ENCODE measurements at regions of chr10 and their contacts with region 1.

Region 1: DNA sequence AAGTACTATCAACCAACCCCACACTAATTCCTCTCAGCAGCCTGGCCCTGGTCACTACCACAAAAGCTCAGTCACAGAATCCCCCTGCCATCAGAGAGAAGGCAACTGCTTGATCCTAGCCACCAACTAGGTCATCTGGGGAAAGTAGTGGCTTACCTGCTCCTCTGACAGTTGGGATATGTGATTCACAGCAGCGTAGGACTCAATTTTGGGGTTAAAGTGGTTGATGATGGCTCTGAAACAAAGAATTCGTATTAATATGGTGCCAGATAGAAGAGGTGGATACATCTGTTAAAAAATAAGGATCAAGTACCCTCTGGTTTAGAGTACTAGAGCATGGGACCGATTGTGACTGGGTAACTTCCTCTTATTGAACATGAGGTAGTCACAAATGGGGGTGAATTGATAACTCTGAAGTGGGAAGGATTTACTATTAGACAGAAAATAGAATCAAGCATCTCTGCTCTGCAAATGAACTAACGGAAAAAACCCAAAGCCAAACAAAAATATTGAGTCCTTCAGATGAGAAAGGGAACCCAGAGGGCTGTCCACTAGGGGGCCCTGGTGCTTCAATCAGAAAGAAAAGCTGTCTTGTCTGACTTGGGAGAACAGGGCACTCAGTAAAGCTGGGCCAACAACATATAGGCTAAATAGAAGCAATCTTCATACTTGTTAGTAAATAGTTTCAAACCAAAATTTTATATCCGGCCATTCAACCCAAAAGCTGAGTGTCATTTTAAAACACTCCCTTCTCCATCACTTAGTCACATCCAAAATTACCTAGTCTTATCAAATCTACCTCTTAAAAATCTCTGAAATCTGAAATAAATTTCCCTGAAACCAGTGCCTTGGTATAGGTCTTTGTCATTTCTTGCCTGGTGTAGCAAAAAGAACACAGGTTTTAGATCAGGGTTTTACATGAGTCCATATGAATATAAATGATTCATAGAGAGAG is 45.9 kb upstream of the KCNIP2 start:
- DNase-seq: peak; percentile 66
- H3K4me3 ChIP-seq: no peak overlapping the region; a peak in 1 of 4 replicates
- H3K27ac ChIP-seq: no peak overlapping the region
- H3K4me1 ChIP-seq: peaks cover 0 to 2% of the 10 kb centered on the region in 2 experiments; a peak in 1 of 4 replicates
- H3K27me3 ChIP-seq: no peaks in the 10 kb centered on the region
- CTCF ChIP-seq: peak; percentile 97
- EP300 ChIP-seq: no peak
- RAD21 ChIP-seq: peak; percentile 86

Region 2: GRCh38 chr10:101319241-101319915 is 570.2 kb before region 1 on chr10:
- CTCF ChIA-PET with region 1: no interaction called
- POLR2A ChIA-PET with region 1: no interaction called
- DNase-seq: no peak
- H3K4me3 ChIP-seq: no peak overlapping the region
- H3K27ac ChIP-seq: no peak overlapping the region
- H3K4me1 ChIP-seq: peaks cover 0 to 14% of the 10 kb centered on the region in 2 experiments; a peak in 1 of 4 replicates
- H3K27me3 ChIP-seq: no peaks in the 10 kb centered on the region; the same call in 1 of the 2 replicates
- CTCF ChIP-seq: no peak
- EP300 ChIP-seq: no peak
- RAD21 ChIP-seq: no peak

Region 3: GRCh38 chr10:101830322-101831168 is 59.0 kb before region 1 on chr10:
- CTCF ChIA-PET with region 1: interaction called, 19 read pairs
- POLR2A ChIA-PET with region 1: no interaction called
- DNase-seq: peak; percentile 96
- H3K4me3 ChIP-seq: peak overlapping the region; percentile 45 to 49
- H3K27ac ChIP-seq: peak overlapping the region; percentile 41 to 87; a peak in 3 of 4 replicates
- H3K4me1 ChIP-seq: peaks cover 14 to 35% of the 10 kb centered on the region in 2 experiments; a peak in 3 of 4 replicates
- H3K27me3 ChIP-seq: no peaks in the 10 kb centered on the region
- CTCF ChIP-seq: no peak
- EP300 ChIP-seq: no peak
- RAD21 ChIP-seq: no peak

Region 4: GRCh38 chr10:101903827-101904550 is 14.5 kb after region 1 on chr10:
- CTCF ChIA-PET with region 1: interaction called, 52 read pairs
- POLR2A ChIA-PET with region 1: no interaction called
- DNase-seq: no peak
- H3K4me3 ChIP-seq: no peak overlapping the region
- H3K27ac ChIP-seq: no peak overlapping the region
- H3K4me1 ChIP-seq: no peaks in the 10 kb centered on the region
- H3K27me3 ChIP-seq: no peaks in the 10 kb centered on the region
- CTCF ChIP-seq: no peak
- EP300 ChIP-seq: no peak
- RAD21 ChIP-seq: no peak

Region 5: DNA sequence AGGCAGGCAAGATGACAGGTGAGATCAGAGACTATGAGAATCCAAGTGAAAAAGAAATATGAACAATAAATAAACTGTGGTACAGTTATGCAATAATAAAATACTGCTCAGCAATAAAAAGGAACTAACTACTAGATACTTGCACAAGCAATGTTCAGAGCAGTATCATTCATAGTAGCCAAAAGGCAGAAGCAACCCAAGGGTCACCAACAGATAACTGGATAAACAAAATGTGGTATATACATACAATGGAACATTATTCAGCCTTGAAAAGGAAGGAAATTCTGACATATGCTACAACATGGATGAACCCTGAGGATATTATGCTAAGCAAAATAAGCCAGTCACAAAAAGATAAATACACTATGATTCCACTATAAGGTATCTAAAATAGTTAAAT is 31.0 kb after region 1 on chr10:
- CTCF ChIA-PET with region 1: interaction called, 17 read pairs
- POLR2A ChIA-PET with region 1: no interaction called
- DNase-seq: no peak
- H3K4me3 ChIP-seq: no peak overlapping the region
- H3K27ac ChIP-seq: no peak overlapping the region
- H3K4me1 ChIP-seq: no peaks in the 10 kb centered on the region
- H3K27me3 ChIP-seq: no peaks in the 10 kb centered on the region
- CTCF ChIP-seq: no peak
- EP300 ChIP-seq: no peak
- RAD21 ChIP-seq: no peak

Region 6: DNA sequence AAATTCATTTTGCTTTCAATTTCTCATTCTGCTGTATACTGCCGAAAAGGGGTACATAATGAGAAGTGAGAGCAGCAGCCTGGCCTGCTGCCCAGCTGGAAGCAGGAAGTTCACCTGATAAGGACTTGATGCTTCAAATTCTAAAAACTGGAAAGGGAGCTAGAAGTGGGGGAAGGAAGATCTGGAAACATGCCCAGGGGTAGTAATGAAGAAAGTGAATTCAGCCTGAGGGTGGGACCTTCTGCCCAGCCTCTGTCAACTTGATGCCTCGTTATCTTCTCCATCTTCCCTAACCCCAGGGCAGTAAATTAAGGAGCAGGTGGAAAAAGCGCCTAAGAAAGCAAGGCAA is 97.1 kb after region 1 on chr10:
- CTCF ChIA-PET with region 1: interaction called, 14 read pairs
- POLR2A ChIA-PET with region 1: no interaction called
- DNase-seq: peak; percentile 24
- H3K4me3 ChIP-seq: no peak overlapping the region
- H3K27ac ChIP-seq: peak overlapping the region in 1 of 2 experiments; percentile 24; a peak in 1 of 4 replicates
- H3K4me1 ChIP-seq: peaks cover 0 to 8% of the 10 kb centered on the region in 2 experiments; a peak in 2 of 4 replicates
- H3K27me3 ChIP-seq: no peaks in the 10 kb centered on the region
- CTCF ChIP-seq: no peak
- EP300 ChIP-seq: no peak
- RAD21 ChIP-seq: no peak

Region 7: GRCh38 chr10:101995451-101996063 is 106.0 kb after region 1 on chr10:
- CTCF ChIA-PET with region 1: interaction called, 12 read pairs
- POLR2A ChIA-PET with region 1: no interaction called
- DNase-seq: no peak
- H3K4me3 ChIP-seq: no peak overlapping the region
- H3K27ac ChIP-seq: no peak overlapping the region
- H3K4me1 ChIP-seq: peaks cover 0 to 3% of the 10 kb centered on the region in 2 experiments; a peak in 1 of 4 replicates
- H3K27me3 ChIP-seq: no peaks in the 10 kb centered on the region
- CTCF ChIP-seq: no peak
- EP300 ChIP-seq: no peak
- RAD21 ChIP-seq: no peak

Region 8: GRCh38 chr10:102064868-102065560 is 175.5 kb after region 1 on chr10 and contains the start of gene HPS6:
- CTCF ChIA-PET with region 1: interaction called, 25 read pairs
- POLR2A ChIA-PET with region 1: no interaction called
- DNase-seq: peak; percentile 98
- H3K4me3 ChIP-seq: peak within 1 kb of the TSS; percentile 78 to 92
- H3K27ac ChIP-seq: peak within 1 kb of the TSS; percentile 74
- H3K4me1 ChIP-seq: peaks cover 8 to 12% of the 10 kb centered on the region in 2 experiments; a peak in 3 of 4 replicates
- H3K27me3 ChIP-seq: no peaks in the 10 kb centered on the region
- CTCF ChIP-seq: peak; percentile 40; the same call in 1 of the 2 replicates
- EP300 ChIP-seq: peak in 1 of 2 experiments; percentile 14; a peak in 1 of 4 replicates
- RAD21 ChIP-seq: peak; percentile 19
- polyA plus RNA-seq, gene HPS6: 7.3 and 7.8 TPM in 2 replicates

Measured in SK-N-SH (cell line).